HepG2 (cell line): ENCODE measurements at regions of chr2 and their contacts with region 1.

Region 1: DNA sequence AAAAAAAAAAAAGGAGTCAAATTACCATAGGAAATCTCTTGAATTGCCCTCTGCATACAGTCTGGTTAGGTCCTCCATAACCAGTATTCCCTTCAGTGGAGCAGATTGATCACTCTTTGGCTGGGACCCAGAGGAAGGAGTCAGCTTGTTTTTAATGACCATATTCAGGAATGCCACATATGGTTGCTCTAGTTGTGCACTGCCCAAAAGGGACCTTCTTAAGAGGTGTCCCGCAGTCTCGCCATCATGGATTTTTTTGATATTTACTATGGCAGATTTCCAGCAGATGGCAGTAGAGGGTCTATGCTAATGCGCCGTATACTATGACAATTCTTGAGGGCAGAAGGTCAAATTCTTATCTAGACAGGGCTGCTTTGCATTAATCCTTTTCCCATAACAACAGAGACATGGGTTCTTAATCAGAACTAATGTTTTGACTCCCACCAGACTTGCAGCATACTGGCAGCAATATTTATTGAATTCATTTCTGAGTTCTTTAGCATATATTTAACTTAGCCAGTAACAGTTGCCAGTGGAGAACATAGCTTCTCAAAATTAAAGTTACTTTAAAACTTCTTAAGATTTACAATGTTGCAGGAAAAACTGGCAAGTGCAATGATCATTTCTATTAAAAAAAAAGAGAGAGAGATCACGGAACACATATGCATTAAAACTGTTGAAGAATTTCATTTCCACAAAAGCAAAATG is 31.8 kb upstream of the INPP4A start:
- DNase-seq: peak; percentile 77
- ATAC-seq: peak; percentile 91
- H3K4me3 ChIP-seq: no peak overlapping the region
- H3K27ac ChIP-seq: no peak overlapping the region
- H3K4me1 ChIP-seq: peaks cover 10% of the 10 kb centered on the region; the same call in 1 of the 2 replicates
- H3K27me3 ChIP-seq: no peaks in the 10 kb centered on the region; a peak in 1 of 5 replicates
- CTCF ChIP-seq: peak; percentile 83
- EP300 ChIP-seq: no peak
- POLR2A ChIP-seq: no peak
- RAD21 ChIP-seq: peak; percentile 65

Region 2: GRCh38 chr2:97697252-97698235 is 715.4 kb before region 1 on chr2:
- CTCF ChIA-PET with region 1: no interaction called
- POLR2A ChIA-PET with region 1: no interaction called
- in situ Hi-C with region 1: no loop called
- intact Hi-C with region 1: no loop called
- DNase-seq: peak; percentile 75
- ATAC-seq: peak; percentile 86
- H3K4me3 ChIP-seq: no peak overlapping the region
- H3K27ac ChIP-seq: no peak overlapping the region
- H3K4me1 ChIP-seq: peaks cover 13% of the 10 kb centered on the region; the same call in 1 of the 2 replicates
- H3K27me3 ChIP-seq: no peaks in the 10 kb centered on the region
- CTCF ChIP-seq: peak; percentile 96
- EP300 ChIP-seq: no peak
- POLR2A ChIP-seq: no peak
- RAD21 ChIP-seq: peak; percentile 97

Region 3: DNA sequence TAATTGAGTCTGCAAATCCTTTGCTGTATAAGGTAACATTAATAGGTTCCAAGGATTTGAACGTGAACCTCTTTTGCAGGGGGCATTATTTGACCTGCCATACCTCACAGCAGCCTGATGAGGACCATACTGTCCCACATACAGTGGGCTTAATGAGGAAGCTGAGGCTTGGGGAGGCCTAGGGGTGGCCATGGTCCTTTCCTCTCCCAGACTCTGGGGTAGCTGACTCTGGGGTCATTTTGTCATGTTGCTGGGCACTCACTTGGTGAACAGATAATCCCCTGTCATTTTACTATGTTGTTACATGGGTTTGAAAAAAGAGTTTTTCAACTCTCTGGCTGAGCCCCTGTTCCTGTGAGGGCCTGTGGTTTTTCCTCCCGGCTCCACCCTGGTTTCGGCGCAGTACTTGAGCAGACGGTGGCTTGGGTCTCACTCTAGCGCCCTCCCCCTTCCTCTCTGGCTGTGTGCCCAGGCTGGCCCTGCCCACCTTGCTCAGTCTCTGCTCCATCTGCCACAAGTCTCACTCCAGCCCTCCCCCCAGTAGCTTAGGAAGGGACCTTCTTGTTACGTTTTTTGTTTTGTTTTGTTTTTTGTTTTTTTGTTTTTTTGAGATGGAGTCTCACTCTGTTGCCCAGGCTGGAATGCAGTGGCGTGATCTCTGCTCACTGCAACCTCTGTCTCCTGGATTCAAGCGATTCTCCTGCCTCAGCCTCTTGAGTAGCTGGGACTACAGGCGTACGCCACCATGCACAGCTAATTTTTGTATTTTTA is 52.7 kb after region 1 on chr2:
- CTCF ChIA-PET with region 1: no interaction called
- POLR2A ChIA-PET with region 1: no interaction called
- in situ Hi-C with region 1: no loop called
- intact Hi-C with region 1: no loop called
- DNase-seq: no peak
- ATAC-seq: 0 out of 3 replicates have a peak, but pooled peaks have one; percentile 17
- H3K4me3 ChIP-seq: no peak overlapping the region
- H3K27ac ChIP-seq: no peak overlapping the region
- H3K4me1 ChIP-seq: peaks cover 22% of the 10 kb centered on the region; the same call in 1 of the 2 replicates
- H3K27me3 ChIP-seq: no peaks in the 10 kb centered on the region
- CTCF ChIP-seq: no peak
- EP300 ChIP-seq: no peak
- POLR2A ChIP-seq: no peak
- RAD21 ChIP-seq: no peak

Region 4: GRCh38 chr2:98518090-98518489 is 105.2 kb after region 1 on chr2:
- CTCF ChIA-PET with region 1: interaction called, 13 read pairs
- POLR2A ChIA-PET with region 1: no interaction called
- in situ Hi-C with region 1: no loop called
- intact Hi-C with region 1: loop called (anchors 1 kb)
- DNase-seq: peak; percentile 55
- ATAC-seq: peak; percentile 85
- H3K4me3 ChIP-seq: no peak overlapping the region
- H3K27ac ChIP-seq: no peak overlapping the region
- H3K4me1 ChIP-seq: no peaks in the 10 kb centered on the region
- H3K27me3 ChIP-seq: no peaks in the 10 kb centered on the region
- CTCF ChIP-seq: peak; percentile 58
- EP300 ChIP-seq: no peak
- POLR2A ChIP-seq: no peak
- RAD21 ChIP-seq: peak; percentile 68; the same call in 1 of the 2 replicates

Region 5: GRCh38 chr2:98601532-98602132 is 188.7 kb after region 1 on chr2:
- CTCF ChIA-PET with region 1: interaction called, 20 read pairs
- POLR2A ChIA-PET with region 1: no interaction called
- in situ Hi-C with region 1: loop called (anchors 5 kb)
- intact Hi-C with region 1: no loop called
- DNase-seq: peak; percentile 69
- ATAC-seq: peak; percentile 99
- H3K4me3 ChIP-seq: no peak overlapping the region
- H3K27ac ChIP-seq: no peak overlapping the region
- H3K4me1 ChIP-seq: peaks cover 9% of the 10 kb centered on the region
- H3K27me3 ChIP-seq: no peaks in the 10 kb centered on the region
- CTCF ChIP-seq: peak; percentile 97
- EP300 ChIP-seq: no peak
- POLR2A ChIP-seq: 0 out of 4 replicates have a peak, but pooled peaks of 1 of the 2 experiments have one; percentile 12
- RAD21 ChIP-seq: peak; percentile 92